HepG2 (cell line): ENCODE measurements at regions of chr1 and their contacts with region 1.

Region 1: DNA sequence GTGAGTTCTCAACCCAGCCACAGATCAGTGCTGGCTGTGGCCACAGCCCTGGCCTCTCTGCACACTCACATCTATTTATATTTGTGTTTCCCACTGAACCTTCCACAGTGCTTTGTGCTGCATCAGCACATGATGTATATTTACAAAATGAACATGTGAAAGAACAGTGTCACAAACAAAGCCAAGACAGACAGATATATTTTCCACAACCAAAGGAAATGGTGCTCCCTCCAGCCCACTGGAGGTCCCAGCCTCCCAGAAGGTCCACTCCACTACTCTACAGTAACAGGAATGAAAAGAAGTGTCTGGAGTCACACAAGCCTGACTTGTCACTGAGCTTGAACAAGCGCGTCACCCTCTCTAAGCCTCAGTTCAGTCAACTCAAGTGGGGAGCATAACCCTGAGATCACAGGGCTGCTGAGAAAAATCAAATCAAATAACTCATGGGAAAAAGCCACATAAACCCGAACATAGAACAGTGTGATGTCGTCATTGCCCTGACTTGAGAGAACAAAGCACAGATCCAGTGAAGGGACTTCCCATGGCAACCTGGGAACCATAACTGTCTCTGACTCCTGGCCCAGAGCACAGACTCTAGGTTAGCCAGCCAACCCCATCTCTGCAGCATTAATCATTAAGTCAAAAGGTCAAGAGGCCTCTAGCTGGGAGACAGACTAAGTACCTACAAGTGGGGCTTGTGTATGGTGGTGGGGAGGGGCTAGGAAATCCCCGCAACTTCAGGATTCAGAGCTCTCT is 121.2 kb downstream of the TRABD2B start:
- DNase-seq: peak; percentile 87
- ATAC-seq: peak; percentile 90
- H3K4me3 ChIP-seq: peak overlapping the region in 1 of 3 experiments; percentile 35; a peak in 2 of 6 replicates
- H3K27ac ChIP-seq: peak overlapping the region; percentile 82
- H3K4me1 ChIP-seq: peaks cover 60% of the 10 kb centered on the region
- H3K27me3 ChIP-seq: no peaks in the 10 kb centered on the region
- CTCF ChIP-seq: 0 out of 2 replicates have a peak, but pooled peaks have one; percentile 0
- EP300 ChIP-seq: peak in 1 of 2 experiments; percentile 45; a peak in 1 of 4 replicates
- POLR2A ChIP-seq: peak in 1 of 2 experiments; percentile 42; a peak in 1 of 4 replicates
- RAD21 ChIP-seq: no peak

Region 2: DNA sequence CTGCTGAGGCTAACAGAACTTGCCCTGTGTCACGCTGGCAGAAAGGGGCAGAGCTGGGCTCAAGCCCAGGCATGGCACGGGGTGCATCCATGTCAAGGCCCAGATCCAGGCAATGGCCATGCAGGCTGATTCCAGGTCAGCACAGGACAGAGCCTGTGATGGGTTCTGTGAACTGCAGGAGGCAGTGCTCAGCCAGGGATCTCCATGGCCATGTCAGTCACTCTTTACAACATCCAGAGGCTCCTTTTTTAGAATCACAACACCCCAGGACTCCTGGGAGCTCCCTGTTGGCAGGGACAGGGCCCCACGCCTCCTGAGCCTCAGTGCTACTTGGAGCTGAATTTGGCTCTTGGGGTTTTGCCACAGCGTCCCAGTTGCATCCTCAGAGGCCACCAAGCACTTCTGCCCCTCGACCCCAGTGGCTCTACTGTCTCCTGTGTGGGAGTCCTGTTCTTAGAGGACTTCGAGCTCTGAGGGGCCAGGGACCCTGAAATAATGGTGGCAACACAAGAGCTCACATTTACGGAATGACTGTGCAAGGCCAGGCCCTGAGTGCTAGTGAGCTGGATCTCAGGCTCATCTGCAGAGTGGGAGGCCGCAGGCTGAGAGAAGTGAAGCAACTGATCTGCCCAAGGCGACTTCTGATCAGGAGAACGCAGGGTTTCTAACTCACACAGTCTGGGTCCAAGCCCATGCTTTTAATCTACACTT is 90.3 kb before region 1 on chr1:
- CTCF ChIA-PET with region 1: no interaction called
- POLR2A ChIA-PET with region 1: no interaction called
- in situ Hi-C with region 1: no loop called
- intact Hi-C with region 1: loop called (anchors 10 kb)
- DNase-seq: peak; percentile 41
- ATAC-seq: peak; percentile 86
- H3K4me3 ChIP-seq: peak overlapping the region in 1 of 3 experiments; percentile 30; a peak in 2 of 6 replicates
- H3K27ac ChIP-seq: no peak overlapping the region
- H3K4me1 ChIP-seq: peaks cover 57% of the 10 kb centered on the region
- H3K27me3 ChIP-seq: peaks cover 0 to 1% of the 10 kb centered on the region in 2 experiments; a peak in 1 of 5 replicates
- CTCF ChIP-seq: peak; percentile 84
- EP300 ChIP-seq: no peak
- POLR2A ChIP-seq: no peak
- RAD21 ChIP-seq: peak; percentile 81

Region 3: DNA sequence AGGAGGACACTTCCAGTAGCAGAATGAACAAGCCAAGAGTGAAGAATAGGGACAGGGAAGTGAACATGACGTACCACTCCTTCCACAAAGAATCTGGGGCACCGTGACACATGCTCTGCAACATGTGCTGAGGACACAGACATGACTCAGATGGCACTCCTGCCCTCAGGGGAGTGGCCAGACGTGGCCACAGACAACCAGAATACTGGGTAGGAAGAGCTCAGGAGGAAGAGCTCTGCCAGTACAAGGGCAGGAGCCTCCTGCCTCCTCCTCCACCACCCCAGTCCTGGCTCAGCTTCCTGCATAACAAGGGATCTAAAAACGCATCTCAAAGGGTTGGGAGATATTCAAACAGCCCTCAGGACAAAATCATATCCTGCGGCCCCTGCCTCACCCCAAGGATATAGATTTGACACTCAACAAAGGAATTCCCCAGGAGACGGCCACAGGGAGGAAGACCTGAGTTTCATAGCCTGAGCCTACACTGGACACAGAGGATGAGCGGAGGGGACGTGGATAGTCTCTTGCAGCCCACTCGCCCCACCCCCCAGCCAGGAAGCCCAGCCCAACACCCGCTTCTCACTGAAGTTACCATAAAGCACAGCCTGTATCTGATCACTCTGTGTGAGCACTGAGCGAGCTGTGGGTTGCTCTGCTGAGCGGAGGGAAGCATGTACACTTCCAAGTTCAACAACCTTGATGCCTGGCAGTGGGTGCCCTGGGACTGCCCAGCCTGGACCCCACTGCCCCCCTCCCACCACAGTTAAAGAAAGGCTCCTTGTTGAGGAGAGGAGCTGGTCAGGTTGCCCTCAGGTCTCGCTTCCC is 18.9 kb after region 1 on chr1:
- CTCF ChIA-PET with region 1: no interaction called
- POLR2A ChIA-PET with region 1: interaction called, 15 read pairs
- in situ Hi-C with region 1: no loop called
- intact Hi-C with region 1: no loop called
- DNase-seq: no peak
- ATAC-seq: peak; percentile 51
- H3K4me3 ChIP-seq: peak overlapping the region in 1 of 3 experiments; percentile 24; a peak in 1 of 6 replicates
- H3K27ac ChIP-seq: no peak overlapping the region
- H3K4me1 ChIP-seq: peaks cover 70% of the 10 kb centered on the region
- H3K27me3 ChIP-seq: peaks cover 0 to 2% of the 10 kb centered on the region in 2 experiments; a peak in 1 of 5 replicates
- CTCF ChIP-seq: no peak
- EP300 ChIP-seq: no peak
- POLR2A ChIP-seq: no peak
- RAD21 ChIP-seq: no peak

Region 4: DNA sequence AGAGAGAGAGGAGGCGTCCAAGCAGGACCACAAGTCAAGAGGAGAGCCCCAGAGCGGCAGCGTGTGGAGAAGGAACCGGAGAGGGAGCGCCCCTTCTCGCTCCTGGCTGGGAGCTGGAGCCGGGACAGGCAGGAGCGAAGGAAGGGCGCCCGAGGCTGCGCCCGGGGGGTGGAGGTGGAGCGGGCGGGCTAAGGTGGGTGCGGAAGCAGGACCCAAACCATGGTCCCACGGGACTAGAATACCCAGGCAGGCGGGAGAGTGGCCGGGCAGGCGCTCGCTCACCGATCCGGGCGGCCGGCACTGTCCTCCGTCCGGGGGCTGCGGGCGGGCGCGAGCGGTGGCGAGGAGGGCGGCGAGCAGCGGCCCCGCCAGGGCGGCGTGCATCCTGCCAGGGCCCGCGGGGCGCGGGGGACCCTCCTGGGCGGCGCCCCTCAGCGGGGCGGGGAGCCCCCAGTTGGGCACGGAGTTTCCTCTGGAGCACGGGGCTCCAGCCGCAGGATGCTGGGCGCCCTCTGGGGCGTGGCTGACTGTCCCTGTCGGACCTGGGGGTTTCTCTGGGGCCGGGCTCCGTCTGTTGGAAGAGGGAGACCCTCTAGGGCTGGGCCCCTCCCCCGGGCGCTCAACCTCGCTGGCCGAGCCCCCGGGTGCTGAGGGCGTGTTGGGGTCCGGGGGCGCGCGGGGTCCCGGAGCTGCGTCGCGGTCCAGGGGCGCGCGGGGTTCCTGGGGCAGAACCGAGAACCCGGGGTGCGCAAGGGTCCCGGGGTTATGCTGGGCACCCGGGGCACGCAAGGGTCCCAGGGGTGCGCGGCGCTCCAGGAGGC is 120.6 kb after region 1 on chr1:
- CTCF ChIA-PET with region 1: no interaction called
- POLR2A ChIA-PET with region 1: no interaction called
- in situ Hi-C with region 1: no loop called
- intact Hi-C with region 1: no loop called
- DNase-seq: no peak
- ATAC-seq: peak; percentile 49
- H3K4me3 ChIP-seq: peak overlapping the region; percentile 26 to 64 (median 38); a peak in 4 of 6 replicates
- H3K27ac ChIP-seq: no peak overlapping the region
- H3K4me1 ChIP-seq: peaks cover 12% of the 10 kb centered on the region; the same call in 1 of the 2 replicates
- H3K27me3 ChIP-seq: peaks cover 8 to 67% of the 10 kb centered on the region in 2 experiments; a peak in 4 of 5 replicates
- CTCF ChIP-seq: 0 out of 2 replicates have a peak, but pooled peaks have one; percentile 3
- EP300 ChIP-seq: no peak
- POLR2A ChIP-seq: no peak
- RAD21 ChIP-seq: no peak